ENCODE measurements at regions of chr3 and their contacts with region 1.

Region 1: GRCh38 chr3:184808021-184808420 is 3.9 kb upstream of the VPS8 start:
- DNase-seq: no peak

Region 2: GRCh38 chr3:184362668-184363540 is 445.1 kb before region 1 on chr3:
- intact Hi-C with region 1: loop called (anchors 10 kb)
- DNase-seq: peak; percentile 91 to 99 (median 95)

Region 3: GRCh38 chr3:184874709-184875644 is 67.0 kb after region 1 on chr3:
- intact Hi-C with region 1: no loop called
- DNase-seq: peak in 3 of 10 donors; percentile 6 to 21 (median 16)